CD8-positive, alpha-beta T cell (primary cell): ENCODE measurements at regions of chr15 and their contacts with region 1.

Region 1: GRCh38 chr15:53013329-53013728 is 223.2 kb upstream of the ONECUT1 start:
- DNase-seq: no peak
- ATAC-seq: no peak
- H3K4me3 ChIP-seq: no peak overlapping the region
- H3K4me3 Mint-ChIP-seq: no peak overlapping the region
- H3K27ac ChIP-seq: no peak overlapping the region
- H3K27ac Mint-ChIP-seq: no peak overlapping the region
- H3K4me1 ChIP-seq: no peaks in the 10 kb centered on the region
- H3K4me1 Mint-ChIP-seq: no peaks in the 10 kb centered on the region
- H3K27me3 ChIP-seq: no peaks in the 10 kb centered on the region
- H3K27me3 Mint-ChIP-seq: no peaks in the 10 kb centered on the region
- CTCF ChIP-seq: no peak

Region 2: DNA sequence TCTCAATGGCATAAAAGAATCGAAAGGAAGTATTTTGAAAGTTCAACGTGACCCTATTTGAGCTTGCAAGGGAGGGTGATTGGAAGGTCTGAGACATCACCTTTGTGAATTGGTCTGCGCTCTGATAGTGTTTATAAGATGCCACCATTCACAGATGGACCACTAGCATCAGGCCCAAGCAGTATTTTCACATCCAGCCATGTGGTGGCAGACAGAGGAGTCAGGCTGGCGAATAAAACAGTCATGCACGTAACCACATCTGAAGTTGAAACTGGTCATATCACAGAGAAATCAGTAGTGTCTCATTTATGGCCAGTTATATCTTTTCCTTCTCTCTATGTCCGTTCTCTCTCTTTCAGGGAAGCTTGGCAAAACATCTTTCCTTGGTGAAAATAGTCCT is 53.0 kb before region 1 on chr15:
- CTCF ChIA-PET with region 1: no interaction called
- POLR2A ChIA-PET with region 1: no interaction called
- intact Hi-C with region 1: loop called in 1 of 2 experiments (anchors 10 kb)
- DNase-seq: no peak
- ATAC-seq: no peak
- H3K4me3 ChIP-seq: no peak overlapping the region
- H3K4me3 Mint-ChIP-seq: no peak overlapping the region
- H3K27ac ChIP-seq: no peak overlapping the region
- H3K27ac Mint-ChIP-seq: no peak overlapping the region
- H3K4me1 ChIP-seq: no peaks in the 10 kb centered on the region
- H3K4me1 Mint-ChIP-seq: no peaks in the 10 kb centered on the region
- H3K27me3 ChIP-seq: no peaks in the 10 kb centered on the region
- H3K27me3 Mint-ChIP-seq: peaks cover 10% of the 10 kb centered on the region
- CTCF ChIP-seq: no peak

Region 3: GRCh38 chr15:53000410-53000809 is 12.9 kb before region 1 on chr15:
- CTCF ChIA-PET with region 1: no interaction called
- POLR2A ChIA-PET with region 1: no interaction called
- intact Hi-C with region 1: no loop called
- DNase-seq: no peak
- ATAC-seq: no peak
- H3K4me3 ChIP-seq: no peak overlapping the region
- H3K4me3 Mint-ChIP-seq: no peak overlapping the region
- H3K27ac ChIP-seq: no peak overlapping the region
- H3K27ac Mint-ChIP-seq: no peak overlapping the region
- H3K4me1 ChIP-seq: no peaks in the 10 kb centered on the region
- H3K4me1 Mint-ChIP-seq: no peaks in the 10 kb centered on the region
- H3K27me3 ChIP-seq: no peaks in the 10 kb centered on the region
- H3K27me3 Mint-ChIP-seq: peaks cover 17% of the 10 kb centered on the region
- CTCF ChIP-seq: no peak